Thyroid gland (tissue), 4 donors: ENCODE measurements at regions of chr15 and their contacts with region 1.

Region 1: DNA sequence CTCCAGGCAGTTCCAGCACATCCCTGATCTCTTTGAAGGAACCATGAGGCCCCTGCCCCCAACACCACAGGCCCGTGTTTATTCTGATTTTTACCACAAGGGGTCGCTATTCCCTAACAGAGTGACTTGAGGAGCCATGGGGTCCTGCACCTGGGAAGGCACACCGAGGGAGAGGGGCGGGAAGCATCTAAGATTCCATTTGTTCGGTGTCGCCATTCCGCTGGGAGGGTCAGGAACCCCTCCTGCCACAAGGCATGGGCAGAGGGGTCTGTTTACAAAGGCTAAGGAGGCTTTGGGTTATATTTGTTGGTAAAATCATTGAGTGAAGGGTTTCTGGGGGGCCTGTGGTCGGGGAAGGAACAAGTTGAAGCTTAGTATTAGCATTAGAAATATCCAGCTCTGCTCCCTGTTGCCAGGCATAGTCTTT is 77.1 kb downstream of the WDR76 start:
- DNase-seq: peak; percentile 53 to 55
- H3K4me3 ChIP-seq: no peak overlapping the region
- H3K27ac ChIP-seq: no peak overlapping the region
- H3K4me1 ChIP-seq: peaks cover 5 to 12% of the 10 kb centered on the region in 2 donors
- H3K27me3 ChIP-seq: no peaks in the 10 kb centered on the region
- CTCF ChIP-seq: peak; percentile 85 to 97 (median 92)
- POLR2A ChIP-seq: no peak

Region 2: DNA sequence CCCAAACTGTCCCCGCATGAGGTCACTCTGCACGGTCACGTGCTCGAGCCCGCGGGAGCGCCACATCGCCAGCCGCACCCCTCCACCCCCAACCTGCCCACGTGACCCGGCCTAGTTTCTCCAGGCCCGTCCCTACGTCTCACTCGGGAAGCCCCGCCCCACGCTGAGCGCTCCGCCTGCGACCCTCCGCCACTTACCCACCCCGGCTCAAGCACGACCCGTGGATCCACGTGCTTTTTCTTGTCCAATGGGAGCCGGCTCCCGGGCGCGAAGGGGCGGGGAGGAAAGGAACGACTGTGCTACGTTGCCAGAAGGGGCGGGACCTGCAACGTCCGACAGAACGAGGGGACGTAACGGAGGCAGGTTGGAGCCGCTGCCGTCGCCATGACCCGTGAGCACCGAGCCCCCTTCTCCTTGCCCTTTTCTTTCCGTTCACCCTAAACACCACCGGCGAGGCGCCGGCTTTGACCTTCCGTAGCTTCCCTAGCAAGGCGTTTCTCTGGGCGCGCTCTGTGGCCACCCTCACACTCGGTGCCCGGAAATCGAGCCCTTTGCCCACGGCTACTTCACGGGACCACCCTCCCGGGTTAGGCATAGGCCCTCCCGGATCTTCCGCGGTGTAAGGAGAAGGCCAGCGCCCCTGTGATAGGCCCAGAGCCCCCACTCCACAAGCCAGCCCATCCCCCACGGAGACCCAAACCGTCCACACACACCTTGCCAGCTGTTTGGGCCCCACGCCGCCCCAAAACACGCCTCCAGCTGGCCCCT is 111.7 kb before region 1 on chr15 and contains the start of gene SERF2:
- intact Hi-C with region 1: no loop called
- DNase-seq: peak; percentile 100
- H3K4me3 ChIP-seq: peak within 1 kb of the TSS; percentile 64 to 100 (median 85)
- H3K27ac ChIP-seq: peak within 1 kb of the TSS; percentile 86 to 96 (median 92)
- H3K4me1 ChIP-seq: peaks cover 16 to 27% of the 10 kb centered on the region in 2 donors
- H3K27me3 ChIP-seq: no peaks in the 10 kb centered on the region
- CTCF ChIP-seq: peak in 1 of 6 experiments; percentile 23
- POLR2A ChIP-seq: peak; percentile 93 to 99
- total RNA-seq, gene SERF2: 331 to 1,163 (median 700) TPM

Region 3: GRCh38 chr15:44066316-44066740 is 162.5 kb after region 1 on chr15:
- intact Hi-C with region 1: loop called (anchors 2 kb)
- DNase-seq: peak; percentile 63 to 72
- H3K4me3 ChIP-seq: no peak overlapping the region
- H3K27ac ChIP-seq: no peak overlapping the region
- H3K4me1 ChIP-seq: no peaks in the 10 kb centered on the region
- H3K27me3 ChIP-seq: no peaks in the 10 kb centered on the region
- CTCF ChIP-seq: peak; percentile 51 to 96 (median 78)
- POLR2A ChIP-seq: no peak

Region 4: GRCh38 chr15:44137750-44138149 is 233.9 kb after region 1 on chr15:
- intact Hi-C with region 1: no loop called
- DNase-seq: no peak
- H3K4me3 ChIP-seq: no peak overlapping the region
- H3K27ac ChIP-seq: no peak overlapping the region
- H3K4me1 ChIP-seq: no peaks in the 10 kb centered on the region
- H3K27me3 ChIP-seq: no peaks in the 10 kb centered on the region
- CTCF ChIP-seq: no peak
- POLR2A ChIP-seq: no peak

Region 5: GRCh38 chr15:44222478-44222877 is 318.6 kb after region 1 on chr15:
- intact Hi-C with region 1: loop called (anchors 5 kb)
- DNase-seq: no peak
- H3K4me3 ChIP-seq: no peak overlapping the region
- H3K27ac ChIP-seq: no peak overlapping the region
- H3K4me1 ChIP-seq: no peaks in the 10 kb centered on the region
- H3K27me3 ChIP-seq: no peaks in the 10 kb centered on the region
- CTCF ChIP-seq: no peak
- POLR2A ChIP-seq: no peak